MCF 10A (cell line): ENCODE measurements at regions of chr9 and their contacts with region 1.

Region 1: DNA sequence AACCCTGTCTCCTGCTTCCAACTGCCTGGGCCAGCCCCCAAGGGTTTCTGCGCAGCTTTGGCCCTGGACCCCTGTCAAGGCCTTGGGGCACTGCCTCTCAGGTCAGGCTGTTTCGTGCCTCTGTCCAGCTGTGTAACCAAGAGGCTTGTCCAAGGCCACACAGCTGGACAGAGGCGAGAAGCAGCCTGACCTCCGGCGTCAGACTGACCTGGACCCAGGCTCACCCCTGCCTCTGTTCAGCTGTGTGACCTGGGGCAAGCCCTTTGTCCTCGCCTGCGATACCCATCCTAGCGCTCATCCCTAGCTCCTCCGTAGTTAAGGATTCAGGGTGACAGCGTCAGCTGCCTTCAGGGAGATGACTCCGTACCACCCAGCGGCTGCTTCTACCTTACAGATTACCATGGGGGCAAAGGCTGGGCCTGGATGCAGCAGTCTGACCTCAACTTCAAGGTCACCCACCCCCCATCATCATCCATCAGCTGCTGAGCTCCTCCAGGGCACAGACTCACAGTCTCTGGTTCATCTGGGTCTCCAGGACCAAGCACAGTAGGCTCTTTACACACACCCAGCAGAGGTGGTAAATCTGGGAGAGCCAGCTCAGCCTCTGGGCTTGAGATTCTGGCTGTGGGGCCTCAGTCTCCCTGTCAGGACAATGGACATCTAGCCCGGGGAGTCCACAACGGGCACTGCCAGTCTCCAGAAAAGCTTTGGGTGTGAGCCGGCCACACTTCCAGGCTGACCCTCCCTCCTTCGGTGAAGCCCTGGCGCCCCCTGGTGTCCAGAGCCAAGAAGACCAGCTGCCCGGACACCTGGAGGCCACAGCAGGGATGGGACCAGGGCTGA is 7.9 kb downstream of the AK1 start:
- DNase-seq: peak; percentile 89
- H3K4me3 Mint-ChIP-seq: no peak overlapping the region
- H3K27ac Mint-ChIP-seq: no peak overlapping the region
- H3K4me1 Mint-ChIP-seq: no peaks in the 10 kb centered on the region
- H3K27me3 Mint-ChIP-seq: no peaks in the 10 kb centered on the region
- CTCF ChIP-seq: peak; percentile 86

Region 2: DNA sequence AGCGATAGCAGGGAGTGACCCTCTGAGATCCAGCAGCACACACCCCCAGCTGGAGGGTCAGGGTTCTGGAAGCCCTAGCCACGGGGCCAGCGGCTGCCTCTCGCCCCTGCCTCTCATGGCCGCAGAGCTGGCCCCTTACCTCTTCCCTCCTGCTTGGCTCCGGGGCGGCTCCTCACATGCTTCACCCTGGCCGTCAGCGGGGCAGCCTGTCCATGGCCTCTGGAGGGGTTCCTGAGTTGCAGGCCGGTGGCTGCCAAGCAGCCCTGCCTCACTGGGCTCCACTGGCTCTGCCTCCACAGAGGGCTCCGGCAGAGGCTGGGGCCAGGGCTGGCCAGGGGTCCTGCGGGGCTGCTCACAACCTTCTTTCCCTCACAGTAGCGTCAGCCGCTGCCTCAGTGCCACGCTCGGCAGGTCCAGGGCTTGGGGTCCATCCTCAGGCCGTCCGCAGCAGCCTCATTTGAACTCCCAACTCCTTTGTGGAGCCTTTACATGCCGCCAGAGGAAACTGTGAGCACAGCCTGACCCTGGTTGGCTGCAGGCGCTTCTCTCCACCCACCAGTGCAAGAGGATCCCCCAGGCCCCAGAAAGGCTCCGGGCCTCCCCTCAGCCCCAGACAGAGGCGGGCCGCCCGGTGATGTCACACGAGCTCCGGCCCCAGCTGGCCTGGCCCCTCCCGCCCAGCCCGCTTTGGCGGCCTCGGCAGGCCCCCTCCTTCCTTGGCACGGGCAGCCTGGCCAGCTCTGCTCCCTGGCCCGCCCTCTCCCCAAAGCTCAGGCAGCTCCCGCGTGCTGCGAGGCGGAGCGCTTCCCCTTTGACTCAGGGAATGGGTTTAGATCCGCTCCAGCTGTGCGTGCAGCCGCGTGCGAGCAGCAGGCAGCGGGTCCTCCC is 747.1 kb before region 1 on chr9 and contains the start of gene ANGPTL2:
- CTCF ChIA-PET with region 1: no interaction called
- POLR2A ChIA-PET with region 1: no interaction called
- intact Hi-C with region 1: no loop called
- DNase-seq: peak; percentile 27
- H3K4me3 Mint-ChIP-seq: peak within 1 kb of the TSS; percentile 4
- H3K27ac Mint-ChIP-seq: no peak within 1 kb of the TSS
- H3K4me1 Mint-ChIP-seq: peaks cover 7% of the 10 kb centered on the region
- H3K27me3 Mint-ChIP-seq: peaks cover 27% of the 10 kb centered on the region
- CTCF ChIP-seq: no peak
- total RNA-seq, gene ANGPTL2: not detected in 2 replicates

Region 3: DNA sequence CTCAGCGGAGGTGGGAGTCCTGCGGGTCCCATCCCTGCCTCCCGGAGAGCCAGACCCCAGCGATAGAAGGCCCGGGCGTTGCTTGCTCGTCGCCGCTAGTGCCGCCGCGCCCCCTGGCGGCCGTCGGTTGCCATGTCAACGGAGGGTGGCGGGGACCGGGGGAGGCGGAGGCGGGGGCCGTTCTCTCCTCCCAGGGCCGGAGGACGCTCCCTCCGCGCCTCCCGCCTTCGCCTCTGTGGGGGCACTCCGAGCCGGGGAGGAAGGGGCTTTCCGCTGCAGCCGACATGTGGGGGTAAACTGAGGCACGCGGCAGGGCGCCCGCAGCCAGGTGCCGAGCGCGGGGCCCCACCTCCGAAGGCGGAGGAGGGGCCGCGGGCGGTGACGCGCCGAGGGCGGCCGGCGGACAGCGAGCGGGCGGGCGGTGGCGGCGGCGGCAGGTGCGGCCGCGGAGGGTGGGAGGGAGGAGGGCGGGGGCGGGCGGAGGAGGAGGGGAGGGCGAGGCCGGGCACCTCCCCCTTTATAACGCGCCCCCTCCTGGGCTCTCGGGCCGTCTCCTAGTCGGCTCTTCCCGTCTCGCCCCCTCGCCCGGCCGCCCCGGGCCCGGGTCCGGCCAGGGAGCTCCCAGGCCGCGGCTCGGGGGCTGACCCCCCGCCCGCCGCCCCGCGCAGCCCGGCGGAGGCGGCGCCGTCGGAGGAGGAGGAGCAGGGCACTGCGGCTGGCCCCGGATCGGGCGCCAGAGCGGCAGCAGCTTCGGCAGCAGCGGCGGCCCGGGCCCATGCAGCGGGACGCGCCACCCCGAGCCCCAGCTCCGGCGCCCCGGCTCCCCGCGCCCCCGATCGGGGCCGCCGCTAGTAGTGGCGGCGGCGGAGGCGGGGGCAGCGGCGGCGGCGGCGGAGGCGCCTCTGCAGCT is 84.3 kb before region 1 on chr9:
- CTCF ChIA-PET with region 1: interaction called, 19 read pairs
- POLR2A ChIA-PET with region 1: interaction called, 5 read pairs
- intact Hi-C with region 1: loop called (anchors 1 kb)
- DNase-seq: peak; percentile 76
- H3K4me3 Mint-ChIP-seq: peak overlapping the region; percentile 90
- H3K27ac Mint-ChIP-seq: peak overlapping the region; percentile 63
- H3K4me1 Mint-ChIP-seq: peaks cover 9% of the 10 kb centered on the region
- H3K27me3 Mint-ChIP-seq: no peaks in the 10 kb centered on the region
- CTCF ChIP-seq: peak; percentile 92

Region 4: GRCh38 chr9:127802576-127803443 is 66.7 kb before region 1 on chr9 and contains the start of gene FPGS:
- CTCF ChIA-PET with region 1: interaction called, 9 read pairs
- POLR2A ChIA-PET with region 1: interaction called, 9 read pairs
- intact Hi-C with region 1: loop called (anchors 5 kb)
- DNase-seq: peak; percentile 80
- H3K4me3 Mint-ChIP-seq: peak within 1 kb of the TSS; percentile 87
- H3K27ac Mint-ChIP-seq: peak within 1 kb of the TSS; percentile 96
- H3K4me1 Mint-ChIP-seq: peaks cover 18% of the 10 kb centered on the region
- H3K27me3 Mint-ChIP-seq: no peaks in the 10 kb centered on the region
- CTCF ChIP-seq: no peak
- total RNA-seq, gene FPGS: 130 and 131 TPM in 2 replicates

Region 5: DNA sequence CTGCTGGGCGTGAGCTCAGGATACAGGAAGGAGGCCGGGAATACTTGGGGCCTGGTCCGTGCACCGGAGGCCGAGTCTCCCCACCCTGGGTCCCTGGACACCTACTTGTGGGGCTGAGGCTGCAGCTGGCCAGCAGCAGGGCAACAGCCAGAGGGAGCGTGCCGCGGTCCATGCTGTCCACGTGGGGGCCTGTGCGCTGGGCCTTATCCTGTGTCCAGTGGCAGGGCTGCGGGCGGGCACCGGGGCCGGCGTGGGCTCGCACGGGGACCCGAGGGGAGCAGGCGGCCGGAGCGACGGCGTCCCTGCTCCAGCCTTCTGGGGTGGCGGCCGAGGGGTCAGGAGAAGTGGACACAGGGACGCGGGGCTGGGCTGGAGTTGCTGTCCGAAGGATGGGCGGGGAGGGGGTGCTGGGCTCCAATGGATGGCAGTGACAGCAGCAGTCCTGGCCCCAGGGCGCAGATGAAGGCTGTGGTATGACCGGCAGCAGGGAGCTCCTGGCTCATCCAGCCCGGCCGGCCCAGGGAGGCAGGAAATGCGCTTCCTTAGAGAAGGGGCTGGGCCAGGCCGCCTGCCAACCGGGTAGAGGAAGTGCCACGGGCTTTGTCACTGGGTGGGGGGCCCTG is 15.2 kb before region 1 on chr9 and contains the start of gene ENG:
- CTCF ChIA-PET with region 1: interaction called, 13 read pairs
- POLR2A ChIA-PET with region 1: no interaction called
- intact Hi-C with region 1: no loop called
- DNase-seq: peak; percentile 48
- H3K4me3 Mint-ChIP-seq: peak within 1 kb of the TSS; percentile 79
- H3K27ac Mint-ChIP-seq: peak within 1 kb of the TSS; percentile 79
- H3K4me1 Mint-ChIP-seq: no peaks in the 10 kb centered on the region
- H3K27me3 Mint-ChIP-seq: no peaks in the 10 kb centered on the region
- CTCF ChIP-seq: peak; percentile 4
- total RNA-seq, gene ENG: 19.2 and 22.1 TPM in 2 replicates

Region 6: DNA sequence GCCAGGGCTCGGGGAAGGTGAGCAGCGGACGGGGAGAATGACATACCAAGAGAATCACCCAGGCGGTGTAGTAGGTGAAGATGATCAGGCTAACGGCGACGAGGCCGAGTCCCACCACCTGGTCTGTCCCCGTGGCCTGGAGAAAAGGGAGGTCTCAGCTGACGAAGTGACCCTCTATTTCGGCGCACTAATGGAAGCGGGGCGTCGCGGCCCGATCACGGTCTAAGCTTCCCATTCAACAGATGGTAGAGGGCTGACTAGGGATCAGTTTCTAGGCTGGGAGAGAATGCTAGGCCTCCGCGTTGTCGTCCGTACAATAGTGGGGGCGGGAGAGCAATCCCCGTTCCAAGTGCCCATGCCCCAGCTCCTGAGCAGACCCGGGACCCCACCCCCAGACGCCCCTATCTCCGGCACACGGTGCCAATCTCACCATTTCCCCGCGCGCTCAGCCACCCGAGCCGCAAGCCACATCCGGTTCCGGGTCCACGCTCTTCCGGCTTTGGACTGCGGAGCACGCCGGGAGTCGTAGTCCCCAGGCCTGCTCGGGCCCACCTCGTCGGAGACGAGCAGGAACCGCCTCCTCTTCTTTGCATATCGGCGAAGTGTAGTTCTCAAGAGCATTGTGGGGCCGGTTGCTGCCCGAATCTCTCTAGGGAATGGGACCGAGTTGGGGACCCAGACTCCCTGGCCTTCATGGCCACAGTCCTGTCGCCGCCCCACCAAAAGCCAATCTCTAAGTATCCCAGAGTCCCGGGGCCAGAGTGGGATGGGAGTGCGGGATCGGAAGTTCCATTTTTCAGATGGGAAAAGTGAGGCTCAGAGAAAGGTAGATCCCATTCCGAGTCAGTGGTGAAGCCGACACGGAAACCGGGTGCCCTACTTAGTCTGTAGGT is 68.1 kb after region 1 on chr9 and contains the start of gene DPM2:
- CTCF ChIA-PET with region 1: no interaction called
- POLR2A ChIA-PET with region 1: no interaction called
- intact Hi-C with region 1: no loop called
- DNase-seq: peak; percentile 72
- H3K4me3 Mint-ChIP-seq: peak within 1 kb of the TSS; percentile 82
- H3K27ac Mint-ChIP-seq: peak within 1 kb of the TSS; percentile 79
- H3K4me1 Mint-ChIP-seq: peaks cover 28% of the 10 kb centered on the region
- H3K27me3 Mint-ChIP-seq: no peaks in the 10 kb centered on the region
- CTCF ChIP-seq: no peak
- total RNA-seq, gene DPM2: 41.5 and 41.8 TPM in 2 replicates